ENCODE measurements at regions of chr5 and their contacts with region 1.

Region 1: GRCh38 chr5:155154973-155155372 is 141.4 kb downstream of the KIF4B start:
- DNase-seq: no peak
- ATAC-seq: no peak
- H3K4me3 ChIP-seq: no peak overlapping the region
- H3K27ac ChIP-seq: no peak overlapping the region
- H3K4me1 ChIP-seq: no peaks in the 10 kb centered on the region
- H3K27me3 ChIP-seq: no peaks in the 10 kb centered on the region

Region 2: GRCh38 chr5:154916884-154917283 is 238.1 kb before region 1 on chr5:
- intact Hi-C with region 1: no loop called
- DNase-seq: no peak
- ATAC-seq: no peak
- H3K4me3 ChIP-seq: no peak overlapping the region
- H3K27ac ChIP-seq: no peak overlapping the region
- H3K4me1 ChIP-seq: no peaks in the 10 kb centered on the region
- H3K27me3 ChIP-seq: no peaks in the 10 kb centered on the region

Region 3: GRCh38 chr5:155649666-155650065 is 494.7 kb after region 1 on chr5:
- intact Hi-C with region 1: loop called in 1 of 2 experiments (anchors 5 kb)
- DNase-seq: no peak
- ATAC-seq: no peak
- H3K4me3 ChIP-seq: no peak overlapping the region
- H3K27ac ChIP-seq: no peak overlapping the region
- H3K4me1 ChIP-seq: no peaks in the 10 kb centered on the region
- H3K27me3 ChIP-seq: no peaks in the 10 kb centered on the region

Measured in aorta (tissue), 5 donors.